Activated T-helper 2 cell treated with anti-CD3 and anti-CD28 coated beads, Interferon-gamma antibody, Interleukin-2, Interleukin-4, amounts not matched to agents 10 μg/mL and 5 μg/mL and 100 μg/mL, durations not matched to agents 14 hours and 24 hours and 36 hours (primary cell): ENCODE measurements at regions of chr12 and their contacts with region 1.

Region 1: DNA sequence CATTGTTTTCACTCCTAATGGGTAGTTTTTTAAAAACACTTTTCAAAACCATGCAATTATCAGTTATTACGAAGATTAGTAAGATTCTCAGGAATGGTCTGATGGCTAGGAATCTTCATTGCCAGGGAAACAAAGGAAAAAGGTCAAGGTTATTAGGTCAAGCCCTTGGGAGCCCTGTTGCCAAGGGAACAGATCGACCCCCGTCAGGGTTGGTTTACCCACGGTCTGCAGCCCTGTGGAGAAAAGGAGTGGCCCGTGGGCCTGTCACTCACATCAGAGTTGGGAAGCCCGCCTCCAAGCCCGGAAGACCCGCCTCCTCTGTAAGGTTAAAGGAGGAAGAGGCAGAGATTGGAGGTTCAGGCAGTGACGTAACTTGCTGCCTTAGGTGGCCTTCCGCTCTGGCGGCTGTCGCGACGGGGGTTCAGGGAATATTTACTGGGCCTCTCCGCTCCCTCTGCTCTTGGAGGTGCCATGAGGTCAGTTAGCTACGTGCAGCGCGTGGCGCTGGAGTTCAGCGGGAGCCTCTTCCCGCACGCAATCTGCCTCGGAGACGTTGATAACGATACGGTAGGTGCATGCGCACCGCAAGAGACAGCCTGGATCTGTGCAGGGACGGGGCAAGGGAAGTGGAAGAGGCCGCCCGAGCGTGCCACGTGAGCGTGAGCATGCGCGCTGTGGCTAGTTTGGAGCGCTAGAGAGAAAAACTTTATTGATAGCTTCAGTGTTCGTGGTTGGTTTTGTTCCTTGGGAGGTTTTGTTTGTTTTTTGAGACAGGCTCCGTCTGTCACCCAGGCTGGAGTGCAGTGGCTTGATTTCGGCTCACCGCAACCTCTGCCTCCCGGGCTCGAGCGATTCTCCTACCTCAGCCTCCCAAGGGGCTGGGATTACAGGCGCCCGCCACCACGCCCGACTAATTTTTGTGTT is at the start of gene ITFG2:
- DNase-seq: peak; percentile 95
- H3K4me3 Mint-ChIP-seq: peak within 1 kb of the TSS; percentile 100
- H3K27ac Mint-ChIP-seq: peak within 1 kb of the TSS; percentile 100
- H3K4me1 Mint-ChIP-seq: peaks cover 13% of the 10 kb centered on the region
- H3K27me3 Mint-ChIP-seq: no peaks in the 10 kb centered on the region
- total RNA-seq, gene ITFG2: 43.4 and 46.4 TPM in 2 replicates

Region 2: DNA sequence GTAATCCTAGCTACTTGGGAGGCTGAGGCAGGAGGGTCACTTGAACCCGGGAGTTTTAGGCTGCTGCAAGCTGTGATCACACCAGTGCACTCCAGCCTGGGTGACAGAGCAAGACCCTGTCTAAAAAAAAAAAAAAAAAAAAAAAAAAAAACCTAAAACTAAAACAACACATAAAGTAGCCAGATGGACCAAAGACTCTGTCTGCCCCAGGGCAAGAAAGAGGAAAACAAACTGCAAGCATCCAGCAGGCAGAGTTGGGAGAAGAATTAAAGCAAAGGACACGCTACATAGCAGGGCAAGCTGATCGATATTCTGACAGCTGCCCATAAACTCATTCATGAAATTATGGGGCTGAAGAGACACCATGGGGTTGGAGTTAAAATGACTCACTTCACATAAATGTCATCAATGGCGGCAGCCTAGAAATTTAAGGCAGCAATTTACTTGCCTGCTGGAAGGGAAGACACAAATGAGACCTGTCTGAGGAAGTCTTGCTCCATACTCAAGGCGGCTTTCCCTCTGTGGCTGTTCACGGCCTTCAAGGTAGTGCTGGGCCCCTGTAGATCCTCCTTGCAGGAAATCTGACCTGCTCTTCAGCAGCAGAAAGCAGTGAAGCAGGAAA is 276.9 kb before region 1 on chr12:
- intact Hi-C with region 1: no loop called
- DNase-seq: no peak
- H3K4me3 Mint-ChIP-seq: no peak overlapping the region
- H3K27ac Mint-ChIP-seq: no peak overlapping the region
- H3K4me1 Mint-ChIP-seq: peaks cover 3% of the 10 kb centered on the region
- H3K27me3 Mint-ChIP-seq: no peaks in the 10 kb centered on the region

Region 3: GRCh38 chr12:2666411-2666810 is 146.1 kb before region 1 on chr12:
- intact Hi-C with region 1: no loop called
- DNase-seq: no peak
- H3K4me3 Mint-ChIP-seq: no peak overlapping the region
- H3K27ac Mint-ChIP-seq: no peak overlapping the region
- H3K4me1 Mint-ChIP-seq: no peaks in the 10 kb centered on the region
- H3K27me3 Mint-ChIP-seq: no peaks in the 10 kb centered on the region

Region 4: DNA sequence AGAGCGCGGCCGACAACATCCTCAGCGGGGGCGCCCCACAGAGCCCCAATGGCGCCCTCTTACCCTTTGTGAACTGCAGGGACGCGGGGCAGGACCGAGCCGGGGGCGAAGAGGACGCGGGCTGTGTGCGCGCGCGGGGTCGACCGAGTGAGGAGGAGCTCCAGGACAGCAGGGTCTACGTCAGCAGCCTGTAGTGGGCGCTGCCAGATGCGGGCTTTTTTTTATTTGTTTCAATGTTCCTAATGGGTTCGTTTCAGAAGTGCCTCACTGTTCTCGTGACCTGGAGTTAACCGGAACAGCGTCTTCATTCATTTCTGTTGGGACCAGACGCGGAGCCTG is 121.6 kb before region 1 on chr12:
- intact Hi-C with region 1: loop called (anchors 1 kb)
- DNase-seq: peak; percentile 59
- H3K4me3 Mint-ChIP-seq: peak overlapping the region; percentile 81
- H3K27ac Mint-ChIP-seq: peak overlapping the region; percentile 87
- H3K4me1 Mint-ChIP-seq: peaks cover 32% of the 10 kb centered on the region
- H3K27me3 Mint-ChIP-seq: peaks cover 4% of the 10 kb centered on the region

Region 5: DNA sequence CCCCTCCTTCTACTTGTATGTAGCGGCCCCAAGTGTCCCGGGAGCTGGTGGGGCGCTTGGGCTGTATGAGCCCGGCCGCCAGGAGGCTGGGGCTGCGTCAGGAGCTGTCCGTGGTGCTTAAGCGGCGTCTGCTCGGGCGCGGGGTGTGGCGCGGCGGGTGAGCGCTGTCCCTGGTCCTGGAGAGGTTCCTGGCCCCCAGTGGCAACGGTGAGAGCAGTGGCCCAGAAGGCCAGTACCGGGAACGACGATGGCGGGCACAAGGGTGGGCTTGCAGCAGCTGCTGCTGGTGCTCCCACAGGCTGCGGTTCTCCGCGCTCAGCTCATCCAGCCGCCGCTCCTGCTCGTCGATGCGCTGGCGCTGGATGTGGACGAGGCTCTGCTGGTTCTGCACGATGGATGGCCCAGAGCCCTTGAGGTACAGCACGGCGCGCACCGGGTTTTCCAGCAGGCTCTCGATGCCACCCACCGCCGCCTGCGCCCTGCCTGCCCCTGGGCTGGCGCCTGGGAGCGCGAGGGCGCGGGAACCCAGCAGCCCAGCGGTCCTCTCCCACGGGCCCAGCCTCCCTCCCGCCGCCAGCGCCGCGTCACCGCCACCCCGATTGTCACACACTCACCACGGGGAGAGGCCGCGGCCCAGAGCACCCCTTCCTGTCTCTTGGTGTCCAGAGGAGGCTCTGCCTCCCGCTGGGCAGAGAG is 59.7 kb before region 1 on chr12:
- intact Hi-C with region 1: loop called (anchors 1 kb)
- DNase-seq: peak; percentile 79
- H3K4me3 Mint-ChIP-seq: no peak overlapping the region
- H3K27ac Mint-ChIP-seq: no peak overlapping the region
- H3K4me1 Mint-ChIP-seq: peaks cover 3% of the 10 kb centered on the region
- H3K27me3 Mint-ChIP-seq: peaks cover 20% of the 10 kb centered on the region

Region 6: DNA sequence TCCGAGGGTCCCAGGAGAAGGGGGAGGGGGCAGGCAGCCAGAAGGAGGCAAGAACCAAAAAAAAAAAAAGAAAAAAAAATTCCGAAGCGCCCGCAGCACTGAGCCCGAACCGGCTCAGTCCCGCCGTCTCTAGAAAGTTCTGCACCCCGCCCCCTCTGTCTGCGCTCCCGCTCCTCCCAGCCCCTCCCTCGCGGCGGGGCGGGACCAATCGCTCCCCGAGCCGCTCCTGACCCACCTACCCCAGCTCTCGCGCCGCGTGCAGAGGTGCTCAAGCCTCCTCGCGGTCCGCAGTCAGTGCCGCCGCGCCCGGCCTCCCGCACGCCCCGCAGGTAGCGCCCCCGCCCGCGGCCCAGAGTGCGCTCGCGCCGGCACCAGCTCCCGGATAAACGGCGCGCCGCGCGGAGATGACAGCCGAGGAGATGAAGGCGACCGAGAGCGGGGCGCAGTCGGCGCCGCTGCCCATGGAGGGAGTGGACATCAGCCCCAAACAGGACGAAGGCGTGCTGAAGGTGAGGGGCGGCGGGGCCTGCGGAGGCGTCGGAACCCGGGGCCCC is 17.7 kb before region 1 on chr12 and contains the start of gene FKBP4:
- intact Hi-C with region 1: loop called (anchors 1 kb)
- DNase-seq: peak; percentile 84
- H3K4me3 Mint-ChIP-seq: peak within 1 kb of the TSS; percentile 85
- H3K27ac Mint-ChIP-seq: peak within 1 kb of the TSS; percentile 22
- H3K4me1 Mint-ChIP-seq: peaks cover 13% of the 10 kb centered on the region
- H3K27me3 Mint-ChIP-seq: peaks cover 17% of the 10 kb centered on the region
- total RNA-seq, gene FKBP4: 219 and 233 TPM in 2 replicates

Region 7: DNA sequence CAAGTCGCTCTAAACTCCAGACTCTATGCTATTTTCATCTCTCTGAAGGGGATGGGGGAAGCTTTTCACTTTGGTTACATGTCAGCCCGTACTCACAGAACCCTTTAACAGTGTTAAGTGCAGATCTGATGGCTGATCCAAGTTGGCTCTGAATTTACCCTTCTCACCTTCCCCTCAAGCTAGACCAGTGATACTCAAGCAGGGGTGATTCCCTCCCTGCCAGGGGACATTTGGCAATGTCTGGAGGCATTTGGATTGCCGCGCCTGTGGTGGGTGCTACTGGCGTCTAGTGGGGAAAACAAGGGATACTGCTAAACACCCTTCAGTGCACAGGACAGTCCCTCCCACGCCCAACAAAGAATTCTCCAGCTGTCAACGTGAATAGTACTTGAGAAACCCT is 50.3 kb after region 1 on chr12:
- intact Hi-C with region 1: loop called (anchors 2 kb)
- DNase-seq: no peak
- H3K4me3 Mint-ChIP-seq: no peak overlapping the region
- H3K27ac Mint-ChIP-seq: no peak overlapping the region
- H3K4me1 Mint-ChIP-seq: peaks cover 4% of the 10 kb centered on the region
- H3K27me3 Mint-ChIP-seq: no peaks in the 10 kb centered on the region